GM23248 (cell line): ENCODE measurements at regions of chr15 and their contacts with region 1.

Region 1: DNA sequence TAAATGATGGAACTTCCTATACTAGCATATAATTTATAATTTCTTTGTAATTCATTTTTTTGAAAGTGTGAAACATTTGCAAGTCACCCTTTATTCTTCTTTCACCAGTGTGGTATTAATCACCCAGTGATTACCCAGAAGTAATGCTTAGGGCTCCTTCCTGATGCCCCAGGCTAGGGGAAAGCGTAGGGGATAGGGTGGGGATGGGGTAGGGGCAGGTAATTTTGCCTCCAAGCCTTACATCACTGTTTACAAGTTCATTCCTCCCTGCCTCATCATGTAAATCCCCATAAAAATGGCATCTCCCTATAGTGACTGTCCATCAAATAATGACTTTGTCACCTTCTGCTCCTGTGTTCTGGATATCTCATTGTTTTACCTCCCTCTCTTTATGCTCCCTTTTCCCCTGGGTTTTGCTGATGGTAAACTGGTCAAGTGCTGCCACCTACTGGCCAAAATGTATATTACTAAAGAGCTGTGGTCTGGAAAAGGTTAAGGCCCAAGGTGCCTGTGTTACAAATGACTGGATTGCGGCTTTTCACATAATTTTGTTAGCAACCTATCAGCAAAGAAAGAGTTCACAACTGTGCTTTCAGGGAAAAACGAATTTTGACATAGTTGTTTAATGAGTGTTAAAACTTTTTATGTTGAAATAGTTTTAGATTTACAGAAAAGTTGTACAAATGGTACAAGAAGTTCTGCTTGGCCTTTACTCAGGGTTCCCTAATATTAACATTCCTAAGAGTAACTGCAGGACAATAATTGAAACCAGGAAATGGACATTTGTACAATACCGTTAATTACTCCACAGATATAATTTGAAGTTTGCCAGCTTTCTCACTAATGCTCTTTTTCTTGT is 54.7 kb downstream of the ONECUT1 start:
- DNase-seq: peak; percentile 85
- H3K4me3 ChIP-seq: no peak overlapping the region
- H3K27ac ChIP-seq: no peak overlapping the region
- H3K4me1 ChIP-seq: peaks cover 25% of the 10 kb centered on the region
- H3K27me3 ChIP-seq: no peaks in the 10 kb centered on the region; the same call in 1 of the 2 replicates

Region 2: DNA sequence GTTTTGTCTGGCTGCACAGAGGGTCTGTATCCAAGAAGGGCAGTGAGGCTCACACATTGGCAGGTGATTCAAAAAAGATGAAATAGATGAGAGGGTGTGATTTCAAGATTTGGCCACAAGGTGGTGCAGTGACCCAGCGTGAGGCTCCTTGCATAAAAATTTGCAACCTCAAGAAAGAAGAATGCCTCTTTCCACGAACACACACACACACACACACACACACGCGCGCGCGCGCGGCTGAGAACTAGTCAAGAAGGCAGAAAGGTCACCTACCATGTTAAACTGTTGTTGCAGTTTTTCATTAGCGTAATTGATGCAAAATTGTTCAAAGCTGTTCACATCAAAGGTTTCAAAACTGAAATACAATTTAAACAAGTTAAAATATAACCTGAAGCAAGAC is 479.1 kb before region 1 on chr15:
- in situ Hi-C with region 1: loop called (anchors 10 kb)
- DNase-seq: peak; percentile 78
- H3K4me3 ChIP-seq: peak overlapping the region; percentile 37; the same call in 1 of the 2 replicates
- H3K27ac ChIP-seq: no peak overlapping the region
- H3K4me1 ChIP-seq: peaks cover 32% of the 10 kb centered on the region
- H3K27me3 ChIP-seq: no peaks in the 10 kb centered on the region

Region 3: DNA sequence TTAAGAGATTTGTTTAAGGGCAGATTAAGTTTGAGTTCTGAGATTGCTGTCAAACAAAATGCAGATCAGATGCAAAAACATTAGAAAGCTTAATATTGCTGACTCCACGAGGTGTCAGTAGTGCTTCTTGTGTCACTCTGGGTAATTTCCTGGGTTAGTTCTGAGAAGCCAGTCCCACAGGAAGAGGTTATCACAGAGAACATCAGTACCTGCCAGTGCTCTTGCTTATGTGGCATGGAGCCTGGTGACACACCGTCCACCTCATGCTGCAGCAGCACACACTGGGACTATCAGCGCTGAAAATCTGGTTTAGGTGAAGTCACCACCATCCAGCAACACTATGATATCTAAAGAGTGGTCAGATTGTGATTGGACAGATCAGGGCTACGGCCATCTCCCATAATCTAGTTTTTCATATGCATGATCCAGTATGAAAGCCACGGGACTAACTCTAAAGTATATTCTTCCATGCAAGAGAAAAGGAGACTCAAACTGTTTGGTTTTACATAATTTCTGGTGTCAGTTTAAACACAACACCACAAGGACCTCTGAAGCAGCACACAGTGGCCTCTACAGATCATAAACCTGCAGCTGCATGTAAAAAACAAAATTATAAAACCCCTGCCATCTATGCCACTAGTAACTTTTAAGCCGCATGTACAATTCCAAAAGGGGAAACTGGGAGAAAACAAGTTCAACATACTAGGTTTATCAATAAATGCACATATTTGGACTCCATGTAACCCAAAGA is 403.8 kb before region 1 on chr15:
- in situ Hi-C with region 1: loop called (anchors 25 kb)
- DNase-seq: peak; percentile 65
- H3K4me3 ChIP-seq: no peak overlapping the region
- H3K27ac ChIP-seq: no peak overlapping the region
- H3K4me1 ChIP-seq: peaks cover 19% of the 10 kb centered on the region
- H3K27me3 ChIP-seq: no peaks in the 10 kb centered on the region

Region 4: GRCh38 chr15:53059273-53060043 is 324.0 kb after region 1 on chr15:
- in situ Hi-C with region 1: no loop called
- DNase-seq: no peak
- H3K4me3 ChIP-seq: no peak overlapping the region
- H3K27ac ChIP-seq: no peak overlapping the region
- H3K4me1 ChIP-seq: no peaks in the 10 kb centered on the region
- H3K27me3 ChIP-seq: no peaks in the 10 kb centered on the region